ENCODE measurements at regions of chr22 and their contacts with region 1.

Region 1: GRCh38 chr22:28051787-28052356 is 132.8 kb upstream of the PITPNB start:
- DNase-seq: peak; percentile 66
- H3K4me3 ChIP-seq: no peak overlapping the region
- H3K27ac ChIP-seq: no peak overlapping the region
- H3K4me1 ChIP-seq: peaks cover 15% of the 10 kb centered on the region
- H3K27me3 ChIP-seq: no peaks in the 10 kb centered on the region
- CTCF ChIP-seq: peak; percentile 85
- POLR2A ChIP-seq: no peak

Region 2: DNA sequence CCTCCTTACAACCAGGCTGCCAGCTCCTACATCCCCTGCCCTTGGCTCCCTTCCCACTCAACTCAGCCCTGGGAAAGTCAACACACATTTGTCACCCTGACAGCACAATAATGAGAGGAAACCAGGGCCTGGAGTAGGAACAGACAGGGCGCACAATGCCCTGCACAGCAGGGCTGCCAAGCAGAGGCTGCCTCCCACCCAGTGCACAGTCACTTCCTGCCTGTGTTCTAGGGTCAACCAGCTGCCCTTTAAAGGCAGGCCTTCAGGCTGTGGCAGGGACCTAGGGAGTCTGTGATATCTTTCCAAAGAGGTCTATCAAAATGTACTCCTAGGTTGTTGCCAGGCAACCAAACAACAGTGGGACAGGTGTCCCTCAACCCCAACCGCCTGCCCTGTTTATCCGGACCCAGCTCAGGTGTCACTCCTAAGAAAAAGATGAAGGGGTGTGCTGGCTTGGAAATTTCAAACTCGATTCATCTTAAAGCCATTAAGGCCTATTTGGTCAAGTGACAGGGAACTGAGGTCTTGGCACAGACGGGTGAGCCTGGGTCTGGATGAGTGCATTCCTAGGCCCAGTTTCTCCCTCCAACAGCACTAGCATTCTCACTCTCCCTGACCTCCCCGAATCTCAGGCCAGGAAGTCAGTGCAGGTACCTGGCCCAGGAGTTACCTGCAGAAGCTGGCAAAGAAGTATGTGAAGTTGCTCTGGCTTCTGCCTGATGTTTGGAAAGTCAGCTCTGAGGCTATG is 22.5 kb before region 1 on chr22:
- CTCF ChIA-PET with region 1: interaction called, 47 read pairs
- POLR2A ChIA-PET with region 1: no interaction called
- dilution Hi-C with region 1: no loop called
- intact Hi-C with region 1: no loop called
- DNase-seq: peak; percentile 99
- H3K4me3 ChIP-seq: no peak overlapping the region
- H3K27ac ChIP-seq: peak overlapping the region; percentile 91
- H3K4me1 ChIP-seq: peaks cover 45% of the 10 kb centered on the region
- H3K27me3 ChIP-seq: no peaks in the 10 kb centered on the region
- CTCF ChIP-seq: no peak
- POLR2A ChIP-seq: peak; percentile 71

Region 3: GRCh38 chr22:28112548-28113043 is 60.7 kb after region 1 on chr22:
- CTCF ChIA-PET with region 1: interaction called, 17 read pairs
- POLR2A ChIA-PET with region 1: no interaction called
- dilution Hi-C with region 1: no loop called
- intact Hi-C with region 1: no loop called
- DNase-seq: peak; percentile 31
- H3K4me3 ChIP-seq: no peak overlapping the region
- H3K27ac ChIP-seq: no peak overlapping the region
- H3K4me1 ChIP-seq: no peaks in the 10 kb centered on the region
- H3K27me3 ChIP-seq: no peaks in the 10 kb centered on the region
- CTCF ChIP-seq: peak; percentile 38 to 42
- POLR2A ChIP-seq: no peak

Region 4: GRCh38 chr22:28435140-28435768 is 383.4 kb after region 1 on chr22:
- CTCF ChIA-PET with region 1: interaction called, 10 read pairs
- POLR2A ChIA-PET with region 1: no interaction called
- dilution Hi-C with region 1: no loop called
- intact Hi-C with region 1: no loop called
- DNase-seq: no peak
- H3K4me3 ChIP-seq: no peak overlapping the region
- H3K27ac ChIP-seq: no peak overlapping the region
- H3K4me1 ChIP-seq: no peaks in the 10 kb centered on the region
- H3K27me3 ChIP-seq: no peaks in the 10 kb centered on the region
- CTCF ChIP-seq: no peak
- POLR2A ChIP-seq: no peak

Region 5: DNA sequence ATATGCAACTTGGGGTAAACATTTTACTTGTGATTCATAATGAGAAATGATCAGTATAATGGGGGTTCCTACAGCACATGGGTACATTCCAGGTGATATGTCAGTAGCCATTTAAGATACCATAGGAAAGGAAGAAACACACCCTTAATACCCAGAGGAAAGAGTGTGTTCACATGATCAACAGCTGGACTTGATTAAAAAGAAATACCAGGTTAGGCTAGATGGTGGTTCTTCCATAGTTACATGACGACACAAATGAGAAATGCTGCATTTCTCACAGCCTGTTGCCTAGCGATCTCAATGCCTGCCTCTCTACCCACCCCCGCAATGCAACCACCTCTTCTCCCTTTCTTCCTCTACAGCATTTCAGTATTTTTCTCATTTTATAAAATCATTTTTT is 530.9 kb after region 1 on chr22:
- CTCF ChIA-PET with region 1: interaction called, 15 read pairs
- POLR2A ChIA-PET with region 1: no interaction called
- dilution Hi-C with region 1: no loop called
- intact Hi-C with region 1: no loop called
- DNase-seq: no peak
- H3K4me3 ChIP-seq: no peak overlapping the region
- H3K27ac ChIP-seq: no peak overlapping the region
- H3K4me1 ChIP-seq: no peaks in the 10 kb centered on the region
- H3K27me3 ChIP-seq: no peaks in the 10 kb centered on the region
- CTCF ChIP-seq: no peak
- POLR2A ChIP-seq: no peak

Region 6: GRCh38 chr22:28829358-28830181 is 777.7 kb after region 1 on chr22:
- CTCF ChIA-PET with region 1: interaction called, 24 read pairs
- POLR2A ChIA-PET with region 1: no interaction called
- dilution Hi-C with region 1: no loop called
- intact Hi-C with region 1: loop called (anchors 2 kb)
- DNase-seq: peak; percentile 72
- H3K4me3 ChIP-seq: no peak overlapping the region
- H3K27ac ChIP-seq: no peak overlapping the region
- H3K4me1 ChIP-seq: no peaks in the 10 kb centered on the region
- H3K27me3 ChIP-seq: no peaks in the 10 kb centered on the region
- CTCF ChIP-seq: peak; percentile 90 to 97
- POLR2A ChIP-seq: no peak